Sigmoid colon (tissue), 7 donors: ENCODE measurements at regions of chr15 and their contacts with region 1.

Region 1: DNA sequence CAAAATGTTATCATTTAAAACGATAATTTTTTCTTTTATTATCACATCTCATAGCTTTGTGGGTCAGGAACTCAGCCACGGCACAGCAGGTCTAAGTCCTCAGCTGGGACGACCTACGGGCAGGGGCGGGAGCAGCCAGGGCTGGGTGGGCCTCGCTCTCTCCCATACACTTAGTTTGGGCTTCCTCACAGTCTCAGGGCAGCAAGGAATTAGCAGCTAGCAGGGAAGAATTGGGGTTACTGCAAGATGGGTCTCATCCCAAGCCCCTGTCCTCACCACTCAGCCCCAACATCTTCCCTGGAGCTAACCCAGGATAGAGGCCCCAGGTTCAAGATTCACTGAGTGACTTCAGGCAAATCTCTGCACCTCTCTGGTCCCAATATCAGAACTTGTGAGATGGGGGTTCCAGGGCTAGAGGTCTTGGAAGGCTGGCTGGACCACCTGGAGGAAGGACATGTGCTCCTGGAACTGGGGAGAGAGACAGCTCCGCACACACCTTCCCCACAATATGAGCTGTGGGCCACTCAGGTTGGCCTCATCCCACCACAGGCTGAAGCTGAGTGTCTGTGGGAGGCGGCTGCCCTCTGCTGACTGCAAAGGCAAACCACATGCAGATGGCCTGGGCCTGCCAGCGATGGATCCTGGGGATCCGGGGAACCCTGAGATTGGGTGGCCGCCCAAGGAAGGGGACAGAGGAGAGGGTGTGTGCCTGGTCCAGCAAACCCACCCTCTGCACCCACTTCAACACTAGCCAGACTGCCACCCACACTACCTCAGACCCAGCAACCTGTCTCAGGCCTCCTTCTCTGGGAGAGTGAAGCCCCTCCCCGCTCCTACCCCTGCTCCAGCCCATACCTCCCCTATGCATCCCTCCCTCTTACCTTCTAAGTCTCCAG is 45.0 kb downstream of the CYP11A1 start:
- DNase-seq: peak; percentile 82
- H3K4me3 ChIP-seq: no peak overlapping the region
- H3K27ac ChIP-seq: no peak overlapping the region
- H3K4me1 ChIP-seq: peaks cover 0 to 23% (median 5%) of the 10 kb centered on the region in 4 donors
- H3K27me3 ChIP-seq: no peaks in the 10 kb centered on the region
- CTCF ChIP-seq: peak; percentile 54 to 77 (median 61)
- EP300 ChIP-seq: no peak
- POLR2A ChIP-seq: no peak

Region 2: DNA sequence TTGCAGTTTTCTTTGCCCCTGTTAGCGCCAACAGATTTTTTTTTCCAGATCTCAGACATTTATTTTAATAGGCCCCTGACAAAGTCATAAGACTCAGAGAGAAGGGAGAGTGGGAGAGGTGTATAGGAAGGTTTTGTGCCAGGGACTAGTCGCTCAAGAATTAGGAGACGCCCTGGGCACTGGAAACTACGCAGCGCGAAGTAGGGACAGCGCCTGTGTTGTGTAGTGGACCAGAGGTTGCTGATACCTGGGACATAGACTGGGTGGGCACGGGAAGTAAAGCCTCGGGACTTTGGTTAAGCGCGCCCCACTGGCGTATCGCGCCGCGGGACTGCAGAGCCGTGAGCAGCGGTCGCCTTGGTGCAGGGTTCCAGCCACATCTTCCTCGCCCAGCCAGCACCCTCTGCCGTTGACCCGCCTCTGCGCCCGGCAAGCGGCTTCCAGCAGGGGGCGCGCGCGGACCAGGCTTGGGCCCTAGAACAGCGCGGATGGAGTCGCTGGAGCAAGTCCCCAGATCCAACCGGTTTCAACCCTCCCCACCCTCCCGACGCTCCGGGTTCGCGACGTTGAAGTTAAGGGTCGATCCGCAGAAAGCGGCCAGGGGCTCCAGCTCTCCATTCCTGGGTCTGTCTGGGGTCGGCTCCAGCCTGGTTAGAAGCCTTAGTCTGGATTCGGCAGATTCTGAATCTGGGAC is 195.0 kb before region 1 on chr15:
- intact Hi-C with region 1: loop called (anchors 1 kb)
- DNase-seq: peak; percentile 93
- H3K4me3 ChIP-seq: peak overlapping the region; percentile 18 to 43 (median 35)
- H3K27ac ChIP-seq: peak overlapping the region in 2 of 4 donors; percentile 41 to 43
- H3K4me1 ChIP-seq: peaks cover 0 to 39% (median 35%) of the 10 kb centered on the region in 4 donors
- H3K27me3 ChIP-seq: peaks cover 34 to 100% (median 78%) of the 10 kb centered on the region in 3 donors
- CTCF ChIP-seq: peak; percentile 93 to 98 (median 95)
- EP300 ChIP-seq: no peak
- POLR2A ChIP-seq: no peak

Region 3: GRCh38 chr15:74240002-74240568 is 82.3 kb before region 1 on chr15:
- intact Hi-C with region 1: no loop called
- DNase-seq: peak; percentile 82
- H3K4me3 ChIP-seq: no peak overlapping the region
- H3K27ac ChIP-seq: peak overlapping the region in 3 of 4 donors; percentile 16 to 38 (median 19)
- H3K4me1 ChIP-seq: peaks cover 0 to 18% (median 12%) of the 10 kb centered on the region in 4 donors
- H3K27me3 ChIP-seq: peaks cover 0 to 7% (median 2%) of the 10 kb centered on the region in 3 donors
- CTCF ChIP-seq: peak in 3 of 4 experiments; percentile 17 to 46 (median 20)
- EP300 ChIP-seq: no peak
- POLR2A ChIP-seq: no peak